ENCODE measurements at regions of chr1 and their contacts with region 1.

Region 1: DNA sequence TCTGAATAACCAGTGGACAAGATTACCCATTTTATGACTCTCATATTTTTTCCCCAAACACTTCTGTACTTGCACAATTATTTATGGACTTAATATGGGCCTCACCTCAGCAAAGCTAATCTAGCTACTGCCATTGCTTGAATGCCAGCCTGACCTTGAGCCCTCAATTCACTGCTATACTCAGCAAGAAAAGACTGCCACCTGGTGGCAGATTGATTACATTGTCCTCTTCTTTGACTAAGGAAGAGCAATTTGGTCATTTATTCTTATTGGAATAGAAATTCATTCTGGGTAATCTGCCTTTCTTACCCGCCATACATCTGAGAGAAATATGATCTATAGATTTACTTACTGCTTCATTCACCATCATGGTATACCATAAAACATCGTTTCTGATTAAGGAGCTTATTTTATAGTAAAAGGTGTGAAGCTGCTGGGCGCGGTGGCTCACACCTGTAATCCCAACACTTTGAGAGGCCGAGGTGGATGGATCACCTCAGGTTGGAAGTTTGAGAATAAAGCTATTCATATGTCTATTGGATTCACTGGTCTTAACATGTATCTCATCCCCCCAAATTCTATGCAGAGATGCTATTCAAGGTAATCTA is 32.9 kb upstream of the DIPK1A start:
- DNase-seq: peak; percentile 62
- CTCF ChIP-seq: peak; percentile 74

Region 2: DNA sequence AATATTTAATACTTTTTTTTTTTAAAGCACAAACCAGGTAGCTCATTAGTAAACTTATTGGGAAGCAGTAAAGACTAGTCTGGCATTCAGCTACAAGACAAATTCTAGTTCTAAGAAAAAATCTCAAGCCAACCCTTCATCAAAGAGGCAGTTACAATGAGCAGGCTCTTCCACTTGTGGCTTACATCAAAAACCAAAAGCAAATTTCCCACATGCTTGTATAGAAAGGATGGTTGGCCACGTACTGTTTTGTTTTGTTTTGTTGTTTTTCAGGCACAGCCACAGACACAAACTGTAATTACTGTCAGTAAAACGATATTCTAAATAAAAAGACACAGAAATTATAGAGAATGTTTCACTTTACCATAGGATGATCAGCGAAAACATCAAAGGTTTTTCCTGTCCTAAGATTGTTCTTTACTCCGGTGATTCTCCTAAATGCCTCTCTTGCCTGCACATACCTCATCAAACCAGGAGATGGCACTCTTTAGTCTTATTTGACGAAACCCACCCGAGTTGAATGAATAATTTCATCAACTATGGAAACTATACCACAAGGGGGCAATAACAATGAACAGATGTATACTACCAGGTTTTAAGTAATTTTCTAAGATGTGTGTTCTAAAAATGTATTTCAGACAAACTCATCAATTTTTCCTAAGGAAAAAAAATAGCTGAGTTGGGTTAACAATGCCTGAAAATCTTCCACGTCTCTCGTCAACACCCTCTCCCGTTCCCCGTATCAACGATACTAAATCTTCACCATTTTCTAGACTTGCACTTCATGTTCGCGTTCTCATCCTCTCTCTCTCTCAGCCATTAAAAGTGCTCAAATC is 135.4 kb before region 1 on chr1:
- in situ Hi-C with region 1: loop called (anchors 10 kb)
- DNase-seq: peak; percentile 72
- CTCF ChIP-seq: peak; percentile 85

Region 3: GRCh38 chr1:93196591-93196990 is 202.4 kb after region 1 on chr1:
- in situ Hi-C with region 1: no loop called
- DNase-seq: no peak
- CTCF ChIP-seq: no peak